ENCODE measurements at regions of chr13 and their contacts with region 1.

Region 1: DNA sequence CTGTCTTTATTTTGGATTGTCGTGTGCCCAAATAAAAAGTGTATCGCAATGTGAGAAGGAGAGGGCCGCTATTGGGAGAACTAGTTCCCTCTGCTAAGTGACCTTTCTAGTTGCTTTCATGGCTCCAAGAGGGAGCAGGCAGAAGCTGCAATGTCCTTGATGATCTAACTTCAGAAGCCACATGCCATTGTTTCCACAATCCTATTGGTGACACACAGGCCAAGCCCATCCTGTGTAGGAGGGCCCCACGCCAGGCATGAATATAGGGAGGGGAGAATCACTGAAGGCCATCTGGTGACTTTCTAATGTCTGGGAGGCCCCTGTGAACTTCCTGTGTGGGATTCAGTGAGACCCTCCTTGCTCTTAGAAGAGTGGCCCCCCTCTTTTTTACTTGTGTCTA is 47.8 kb upstream of the KPNA3 start:
- DNase-seq: no peak
- H3K4me3 Mint-ChIP-seq: no peak overlapping the region
- H3K27ac Mint-ChIP-seq: no peak overlapping the region
- H3K4me1 Mint-ChIP-seq: no peaks in the 10 kb centered on the region
- H3K27me3 Mint-ChIP-seq: no peaks in the 10 kb centered on the region
- CTCF ChIP-seq: no peak

Region 2: GRCh38 chr13:49649244-49649962 is 190.9 kb before region 1 on chr13:
- CTCF ChIA-PET with region 1: no interaction called
- intact Hi-C with region 1: loop called (anchors 5 kb)
- DNase-seq: no peak
- H3K4me3 Mint-ChIP-seq: no peak overlapping the region
- H3K27ac Mint-ChIP-seq: no peak overlapping the region
- H3K4me1 Mint-ChIP-seq: no peaks in the 10 kb centered on the region
- H3K27me3 Mint-ChIP-seq: no peaks in the 10 kb centered on the region
- CTCF ChIP-seq: no peak

Region 3: GRCh38 chr13:49669735-49670309 is 170.4 kb before region 1 on chr13:
- CTCF ChIA-PET with region 1: no interaction called
- intact Hi-C with region 1: loop called (anchors 5 kb)
- DNase-seq: peak; percentile 49
- H3K4me3 Mint-ChIP-seq: no peak overlapping the region
- H3K27ac Mint-ChIP-seq: no peak overlapping the region
- H3K4me1 Mint-ChIP-seq: no peaks in the 10 kb centered on the region
- H3K27me3 Mint-ChIP-seq: no peaks in the 10 kb centered on the region
- CTCF ChIP-seq: peak; percentile 30

Region 4: GRCh38 chr13:49792550-49793324 is 47.5 kb before region 1 on chr13 and contains the start of gene KPNA3:
- CTCF ChIA-PET with region 1: no interaction called
- intact Hi-C with region 1: loop called (anchors 5 kb)
- DNase-seq: peak; percentile 89
- H3K4me3 Mint-ChIP-seq: peak within 1 kb of the TSS; percentile 79
- H3K27ac Mint-ChIP-seq: peak within 1 kb of the TSS; percentile 65
- H3K4me1 Mint-ChIP-seq: peaks cover 18% of the 10 kb centered on the region
- H3K27me3 Mint-ChIP-seq: no peaks in the 10 kb centered on the region
- CTCF ChIP-seq: no peak
- total RNA-seq, gene KPNA3: 19.3 and 23.1 TPM in 2 replicates